GM10248 (cell line): ENCODE measurements at regions of chr11 and their contacts with region 1.

Region 1: GRCh38 chr11:111213256-111213655 is 32.3 kb upstream of the POU2AF2 start:
- DNase-seq: no peak
- CTCF ChIP-seq: no peak

Region 2: GRCh38 chr11:111019871-111020670 is 193.2 kb before region 1 on chr11:
- CTCF ChIA-PET with region 1: no interaction called
- POLR2A ChIA-PET with region 1: no interaction called
- DNase-seq: no peak
- CTCF ChIP-seq: no peak

Region 3: DNA sequence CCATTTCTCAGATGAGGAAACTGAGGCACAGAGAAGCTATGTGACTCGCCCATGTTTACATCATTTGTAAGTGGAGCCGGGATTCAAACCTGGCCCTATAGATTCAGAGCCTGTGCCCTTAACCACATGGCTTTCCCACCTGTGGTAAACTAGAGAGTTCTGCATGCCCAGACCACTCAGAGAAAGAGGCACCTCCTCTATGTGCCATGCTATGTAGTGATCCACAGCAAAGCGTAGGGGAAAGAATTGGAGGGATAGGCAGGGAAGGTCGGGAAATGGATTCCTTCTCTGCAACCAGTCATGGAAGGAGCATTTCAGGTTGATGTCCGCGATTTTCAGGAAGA is 16.8 kb after region 1 on chr11:
- CTCF ChIA-PET with region 1: interaction called, 11 read pairs
- POLR2A ChIA-PET with region 1: no interaction called
- DNase-seq: no peak
- CTCF ChIP-seq: no peak